Activated CD4-positive, alpha-beta T cell treated with anti-CD3 and anti-CD28 coated beads for 36 hours (primary cell): ENCODE measurements at regions of chr16 and their contacts with region 1.

Region 1: DNA sequence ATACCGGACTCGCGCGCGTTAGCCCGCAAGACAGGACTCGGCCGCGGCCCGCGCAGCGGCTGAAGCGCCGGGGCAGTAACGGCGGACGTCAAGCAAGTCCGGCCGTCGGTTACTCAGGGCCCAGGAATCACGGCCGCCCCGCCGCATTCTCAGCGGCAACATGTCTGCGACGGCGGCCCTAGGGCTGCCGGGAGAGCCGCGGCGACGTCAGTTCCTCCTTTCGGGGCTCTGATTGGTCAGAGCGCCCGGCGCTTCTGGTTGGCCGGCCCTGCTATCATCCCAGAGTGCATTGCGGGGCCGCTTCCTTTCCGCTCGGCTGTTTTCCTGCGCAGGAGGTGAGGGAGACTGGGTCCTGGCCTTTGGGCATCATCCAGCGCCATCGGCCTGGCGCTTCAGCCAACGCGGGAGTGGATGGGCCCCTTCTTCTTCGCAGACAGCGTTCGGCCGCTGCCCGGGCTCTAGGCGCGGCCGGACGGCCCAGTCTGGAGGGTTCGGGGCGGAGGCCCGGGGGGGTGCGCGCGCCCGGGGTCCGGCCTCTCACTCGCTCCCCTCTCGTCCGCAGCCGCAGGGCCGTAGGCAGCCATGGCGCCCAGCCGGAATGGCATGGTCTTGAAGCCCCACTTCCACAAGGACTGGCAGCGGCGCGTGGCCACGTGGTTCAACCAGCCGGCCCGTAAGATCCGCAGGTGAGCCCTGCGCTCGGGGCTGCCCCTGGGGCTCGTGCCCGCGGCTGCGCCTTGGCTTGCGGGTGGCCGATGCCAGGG is at the start of gene RPL13:
- DNase-seq: peak; percentile 97
- ATAC-seq: peak; percentile 90
- H3K4me3 Mint-ChIP-seq: peak within 1 kb of the TSS; percentile 95
- H3K27ac Mint-ChIP-seq: peak within 1 kb of the TSS; percentile 99
- H3K4me1 Mint-ChIP-seq: peaks cover 46% of the 10 kb centered on the region
- H3K27me3 Mint-ChIP-seq: no peaks in the 10 kb centered on the region
- total RNA-seq, gene RPL13: 2,518 to 3,038 TPM

Region 2: DNA sequence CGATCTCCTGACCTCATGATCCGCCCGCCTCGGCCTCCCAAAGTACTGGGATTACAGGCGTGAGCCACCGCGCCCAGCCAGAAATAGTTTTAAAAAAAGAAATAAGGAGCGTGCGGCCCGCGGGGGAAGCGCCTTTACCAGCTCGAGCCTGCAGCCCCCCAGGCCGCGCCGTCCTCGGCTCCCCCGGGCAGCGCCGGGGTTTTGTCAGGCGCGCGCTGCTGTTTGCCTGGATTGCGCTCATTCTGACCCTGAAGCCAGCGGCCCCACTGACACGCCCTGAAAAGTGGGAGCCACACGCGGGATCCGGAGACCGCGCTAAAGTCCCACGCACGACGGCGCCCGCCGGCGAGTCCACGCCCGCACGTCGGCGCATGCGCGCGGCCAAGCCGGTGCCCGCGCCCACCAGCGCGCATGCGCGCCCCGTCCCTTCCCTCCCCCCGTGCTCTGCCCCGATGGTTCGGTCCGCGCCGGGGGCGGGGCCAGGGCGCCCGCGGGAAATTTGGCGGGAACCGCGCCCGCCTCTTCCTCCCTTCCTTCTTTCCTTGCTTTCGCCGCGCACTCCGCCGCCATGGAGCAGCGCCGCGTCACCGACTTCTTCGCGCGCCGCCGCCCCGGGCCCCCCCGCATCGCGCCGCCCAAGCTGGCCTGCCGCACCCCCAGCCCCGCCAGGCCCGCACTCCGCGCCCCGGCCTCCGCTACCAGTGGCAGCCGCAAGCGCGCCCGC is 757.1 kb before region 1 on chr16 and contains the start of gene CDT1:
- CTCF ChIA-PET with region 1: no interaction called
- POLR2A ChIA-PET with region 1: no interaction called
- intact Hi-C with region 1: loop called in 1 of 2 experiments (anchors 5 kb)
- DNase-seq: peak; percentile 90
- ATAC-seq: peak; percentile 32
- H3K4me3 Mint-ChIP-seq: peak within 1 kb of the TSS; percentile 83
- H3K27ac Mint-ChIP-seq: peak within 1 kb of the TSS; percentile 94
- H3K4me1 Mint-ChIP-seq: peaks cover 24% of the 10 kb centered on the region
- H3K27me3 Mint-ChIP-seq: no peaks in the 10 kb centered on the region
- total RNA-seq, gene CDT1: 136 to 182 TPM

Region 3: GRCh38 chr16:89256651-89257254 is 303.8 kb before region 1 on chr16:
- CTCF ChIA-PET with region 1: no interaction called
- POLR2A ChIA-PET with region 1: no interaction called
- intact Hi-C with region 1: loop called in 1 of 2 experiments (anchors 2 kb)
- DNase-seq: peak; percentile 93
- ATAC-seq: peak; percentile 100
- H3K4me3 Mint-ChIP-seq: peak overlapping the region; percentile 62
- H3K27ac Mint-ChIP-seq: peak overlapping the region; percentile 65
- H3K4me1 Mint-ChIP-seq: peaks cover 19% of the 10 kb centered on the region
- H3K27me3 Mint-ChIP-seq: peaks cover 16% of the 10 kb centered on the region

Region 4: DNA sequence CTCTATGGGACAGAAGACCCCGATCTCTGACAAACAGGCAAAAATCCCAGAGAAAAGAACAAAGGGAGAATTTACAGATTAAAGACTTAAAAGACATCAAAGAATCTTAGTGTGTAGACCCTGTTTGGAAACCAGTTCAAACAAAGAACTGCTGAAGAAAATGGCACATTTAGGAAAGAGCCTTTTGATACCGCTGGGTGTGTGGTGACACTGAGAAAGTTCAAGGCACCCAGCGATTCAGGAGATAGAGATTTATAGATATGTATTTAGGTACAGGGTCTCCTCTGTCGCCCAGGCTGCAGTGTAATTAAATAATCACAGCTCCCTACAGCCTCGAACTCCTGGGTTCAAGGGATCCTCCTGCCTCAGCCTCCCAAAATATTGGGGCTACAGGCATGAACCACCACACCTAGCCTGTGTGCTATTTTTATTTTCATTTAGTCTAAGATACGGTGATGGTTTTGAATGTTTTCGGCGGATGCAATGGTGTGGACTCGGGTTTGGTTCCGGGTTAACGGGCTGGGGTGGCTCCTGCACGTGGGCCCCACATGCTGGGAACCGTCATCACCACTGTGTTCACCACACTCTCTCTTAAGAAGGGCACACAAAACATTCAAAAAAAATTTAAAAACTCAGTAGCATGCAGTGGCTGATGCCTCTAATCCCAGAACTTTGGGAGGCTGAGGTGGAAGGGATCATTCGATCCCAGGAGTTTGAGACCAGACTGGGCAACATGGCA is 229.0 kb before region 1 on chr16:
- CTCF ChIA-PET with region 1: no interaction called
- POLR2A ChIA-PET with region 1: no interaction called
- intact Hi-C with region 1: loop called in 1 of 2 experiments (anchors 2 kb)
- DNase-seq: no peak
- ATAC-seq: no peak
- H3K4me3 Mint-ChIP-seq: no peak overlapping the region
- H3K27ac Mint-ChIP-seq: peak overlapping the region; percentile 37
- H3K4me1 Mint-ChIP-seq: peaks cover 88% of the 10 kb centered on the region
- H3K27me3 Mint-ChIP-seq: no peaks in the 10 kb centered on the region